WTC11 (cell line): ENCODE measurements at regions of chr5 and their contacts with region 1.

Region 1: DNA sequence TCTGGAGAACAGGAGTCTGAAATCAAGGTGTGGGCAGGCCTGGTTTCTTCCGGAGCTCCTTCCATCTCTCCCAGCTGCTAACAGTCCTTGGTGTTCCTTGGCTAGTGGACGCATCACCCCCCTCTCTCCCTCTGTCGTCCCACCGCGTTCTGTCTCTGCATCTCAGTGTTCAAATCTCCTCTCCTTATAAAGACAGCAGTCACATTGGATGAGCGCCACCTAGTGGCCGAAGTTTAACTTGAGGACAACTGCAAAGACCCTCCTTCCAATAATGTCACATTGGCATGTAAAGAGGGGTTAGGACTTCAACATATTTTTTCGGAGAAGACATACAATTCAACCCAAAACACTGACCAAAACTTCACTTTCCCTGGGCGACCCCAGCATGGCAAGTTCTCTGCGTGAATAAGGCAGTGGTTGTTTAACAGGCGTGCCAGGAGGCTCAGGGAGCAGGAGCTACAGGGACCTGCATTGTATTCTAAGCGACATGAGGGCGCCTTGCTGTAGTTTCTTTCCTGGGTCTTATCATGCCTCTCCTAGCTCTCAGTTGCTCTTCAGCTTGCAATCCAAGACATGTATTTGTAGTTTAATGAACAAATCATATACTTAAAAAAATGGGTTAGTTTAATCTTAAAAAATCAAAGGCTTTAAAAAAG is 27.9 kb upstream of the BASP1 start:
- DNase-seq: peak; percentile 88
- ATAC-seq: peak; percentile 75
- H3K4me3 Mint-ChIP-seq: no peak overlapping the region
- H3K27ac Mint-ChIP-seq: no peak overlapping the region
- H3K4me1 Mint-ChIP-seq: peaks cover 14% of the 10 kb centered on the region
- H3K27me3 Mint-ChIP-seq: no peaks in the 10 kb centered on the region
- CTCF ChIP-seq: peak; percentile 88

Region 2: GRCh38 chr5:16736158-16736995 is 453.1 kb before region 1 on chr5:
- CTCF ChIA-PET with region 1: interaction called, 11 read pairs
- POLR2A ChIA-PET with region 1: no interaction called
- DNase-seq: peak; percentile 56
- ATAC-seq: peak; percentile 19
- H3K4me3 Mint-ChIP-seq: peak overlapping the region; percentile 80
- H3K27ac Mint-ChIP-seq: peak overlapping the region; percentile 99
- H3K4me1 Mint-ChIP-seq: peaks cover 72% of the 10 kb centered on the region
- H3K27me3 Mint-ChIP-seq: no peaks in the 10 kb centered on the region
- CTCF ChIP-seq: no peak

Region 3: DNA sequence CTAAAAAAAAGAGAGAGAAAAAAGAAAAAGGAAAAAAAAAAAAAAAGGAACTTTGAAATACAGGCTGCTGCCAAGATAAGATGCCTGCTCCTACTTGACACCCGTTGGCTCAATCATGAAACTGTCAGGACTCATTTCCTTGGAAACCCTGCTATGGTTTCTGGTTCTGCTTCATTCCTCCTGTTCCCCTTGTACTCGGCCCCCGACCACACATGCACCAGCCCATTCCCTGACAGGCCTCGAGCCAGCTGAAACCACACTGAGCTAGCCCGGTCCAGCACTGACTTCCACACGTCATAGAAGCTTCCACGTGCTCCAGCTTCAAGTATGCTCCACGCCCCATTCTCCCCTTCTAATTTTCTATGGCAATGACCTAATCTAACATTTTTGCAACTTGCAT is 346.6 kb before region 1 on chr5:
- CTCF ChIA-PET with region 1: interaction called, 11 read pairs
- POLR2A ChIA-PET with region 1: no interaction called
- DNase-seq: no peak
- ATAC-seq: no peak
- H3K4me3 Mint-ChIP-seq: no peak overlapping the region
- H3K27ac Mint-ChIP-seq: no peak overlapping the region
- H3K4me1 Mint-ChIP-seq: peaks cover 19% of the 10 kb centered on the region
- H3K27me3 Mint-ChIP-seq: no peaks in the 10 kb centered on the region
- CTCF ChIP-seq: no peak

Region 4: DNA sequence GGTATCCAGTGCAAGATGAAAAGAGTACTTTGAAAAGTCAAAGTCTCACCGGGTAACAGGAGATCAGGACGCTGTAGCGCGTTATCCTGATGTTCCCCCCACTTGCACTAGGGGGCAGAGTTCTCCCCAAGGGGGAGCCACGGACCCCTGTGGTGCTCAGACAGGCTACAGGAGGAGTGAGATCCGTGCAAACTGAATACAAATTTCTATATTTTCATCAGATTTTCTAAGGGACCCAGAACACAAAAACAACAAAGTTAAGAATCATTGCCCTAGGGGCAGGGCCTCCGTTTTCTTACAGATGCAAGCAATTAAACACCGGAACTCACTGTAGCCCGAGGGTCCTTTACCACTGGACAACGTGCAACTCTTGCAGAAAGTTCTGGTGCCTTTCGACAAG is 255.4 kb before region 1 on chr5:
- CTCF ChIA-PET with region 1: interaction called, 19 read pairs
- POLR2A ChIA-PET with region 1: interaction called, 3 read pairs
- DNase-seq: peak; percentile 91
- ATAC-seq: peak; percentile 14
- H3K4me3 Mint-ChIP-seq: peak overlapping the region; percentile 87
- H3K27ac Mint-ChIP-seq: no peak overlapping the region
- H3K4me1 Mint-ChIP-seq: peaks cover 61% of the 10 kb centered on the region
- H3K27me3 Mint-ChIP-seq: peaks cover 78% of the 10 kb centered on the region
- CTCF ChIP-seq: peak; percentile 91

Region 5: DNA sequence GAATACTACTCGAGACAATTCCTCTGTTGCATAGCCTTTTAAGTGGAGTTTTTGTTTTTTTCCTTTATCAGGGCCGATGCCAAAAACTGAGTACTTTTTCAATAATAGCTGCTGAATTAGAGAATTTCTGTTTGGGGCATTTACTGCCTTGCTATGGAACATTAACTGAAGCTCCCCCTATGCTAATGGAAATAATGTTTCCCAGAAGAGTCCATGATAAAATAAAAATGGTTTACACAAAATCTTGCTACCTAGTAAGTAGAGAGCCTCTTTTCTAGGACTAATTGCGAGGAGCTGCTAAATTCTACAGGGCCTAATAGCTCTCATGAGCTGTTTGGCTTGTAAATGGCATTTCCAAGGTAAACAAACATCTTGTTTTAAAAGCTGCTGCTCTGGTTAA is 125.3 kb before region 1 on chr5:
- CTCF ChIA-PET with region 1: interaction called, 11 read pairs
- POLR2A ChIA-PET with region 1: no interaction called
- DNase-seq: no peak
- ATAC-seq: no peak
- H3K4me3 Mint-ChIP-seq: no peak overlapping the region
- H3K27ac Mint-ChIP-seq: no peak overlapping the region
- H3K4me1 Mint-ChIP-seq: peaks cover 23% of the 10 kb centered on the region
- H3K27me3 Mint-ChIP-seq: no peaks in the 10 kb centered on the region; the same call in 1 of the 2 replicates
- CTCF ChIP-seq: no peak

Region 6: GRCh38 chr5:17151686-17152085 is 37.8 kb before region 1 on chr5:
- CTCF ChIA-PET with region 1: interaction called, 13 read pairs
- POLR2A ChIA-PET with region 1: no interaction called
- DNase-seq: peak; percentile 47
- ATAC-seq: peak; percentile 86
- H3K4me3 Mint-ChIP-seq: no peak overlapping the region
- H3K27ac Mint-ChIP-seq: peak overlapping the region; percentile 42; the same call in 1 of the 2 replicates
- H3K4me1 Mint-ChIP-seq: peaks cover 24% of the 10 kb centered on the region
- H3K27me3 Mint-ChIP-seq: peaks cover 31% of the 10 kb centered on the region
- CTCF ChIP-seq: no peak

Region 7: GRCh38 chr5:17216176-17216973 is 26.9 kb after region 1 on chr5:
- CTCF ChIA-PET with region 1: interaction called, 10 read pairs
- POLR2A ChIA-PET with region 1: no interaction called
- DNase-seq: peak; percentile 81
- ATAC-seq: peak; percentile 44
- H3K4me3 Mint-ChIP-seq: peak overlapping the region; percentile 87
- H3K27ac Mint-ChIP-seq: no peak overlapping the region; the same call in 1 of the 2 replicates
- H3K4me1 Mint-ChIP-seq: peaks cover 58% of the 10 kb centered on the region
- H3K27me3 Mint-ChIP-seq: no peaks in the 10 kb centered on the region
- CTCF ChIP-seq: peak; percentile 51; the same call in 1 of the 2 replicates